ENCODE measurements at regions of chr20 and their contacts with region 1.

Region 1: GRCh38 chr20:41136680-41137613 is at the start of gene PLCG1:
- DNase-seq: peak; percentile 56 to 94
- H3K4me3 ChIP-seq: peak within 1 kb of the TSS; percentile 80 to 97 (median 90)
- H3K27ac ChIP-seq: peak within 1 kb of the TSS; percentile 93
- H3K4me1 ChIP-seq: peaks cover 25 to 40% (median 27%) of the 10 kb centered on the region in 4 experiments
- H3K27me3 ChIP-seq: peaks cover 0 to 9% (median 2%) of the 10 kb centered on the region in 4 experiments; a peak in 3 of 7 replicates
- CTCF ChIP-seq: no peak; a peak in 1 of 4 replicates
- EP300 ChIP-seq: no peak
- POLR2A ChIP-seq: peak; percentile 75 to 83
- RAD21 ChIP-seq: no peak
- total RNA-seq, gene PLCG1: 151 and 154 TPM in 2 replicates

Region 2: DNA sequence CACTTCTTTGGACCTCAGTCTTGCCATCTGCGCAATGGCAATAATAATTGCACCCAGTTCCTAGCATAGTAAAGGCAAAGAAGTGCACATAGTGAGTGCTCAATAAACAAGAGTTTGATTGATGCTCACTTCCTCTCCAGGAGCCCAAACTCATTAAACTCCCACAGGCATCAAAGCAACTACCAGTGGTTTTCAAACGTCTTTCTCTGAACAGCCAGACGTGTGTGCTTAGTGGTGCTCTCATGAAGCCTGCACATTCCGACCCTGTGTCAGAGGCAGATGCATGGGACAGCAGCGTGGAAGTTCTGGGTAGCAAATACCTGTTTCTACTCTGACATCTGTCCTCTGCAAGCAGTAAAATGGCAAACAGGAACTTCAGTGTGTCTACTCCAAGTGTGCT is 301.6 kb before region 1 on chr20:
- CTCF ChIA-PET with region 1: no interaction called
- POLR2A ChIA-PET with region 1: no interaction called
- DNase-seq: no peak
- H3K4me3 ChIP-seq: no peak overlapping the region
- H3K27ac ChIP-seq: no peak overlapping the region
- H3K4me1 ChIP-seq: no peaks in the 10 kb centered on the region
- H3K27me3 ChIP-seq: no peaks in the 10 kb centered on the region; a peak in 1 of 7 replicates
- CTCF ChIP-seq: no peak
- EP300 ChIP-seq: no peak
- POLR2A ChIP-seq: no peak
- RAD21 ChIP-seq: no peak

Region 3: DNA sequence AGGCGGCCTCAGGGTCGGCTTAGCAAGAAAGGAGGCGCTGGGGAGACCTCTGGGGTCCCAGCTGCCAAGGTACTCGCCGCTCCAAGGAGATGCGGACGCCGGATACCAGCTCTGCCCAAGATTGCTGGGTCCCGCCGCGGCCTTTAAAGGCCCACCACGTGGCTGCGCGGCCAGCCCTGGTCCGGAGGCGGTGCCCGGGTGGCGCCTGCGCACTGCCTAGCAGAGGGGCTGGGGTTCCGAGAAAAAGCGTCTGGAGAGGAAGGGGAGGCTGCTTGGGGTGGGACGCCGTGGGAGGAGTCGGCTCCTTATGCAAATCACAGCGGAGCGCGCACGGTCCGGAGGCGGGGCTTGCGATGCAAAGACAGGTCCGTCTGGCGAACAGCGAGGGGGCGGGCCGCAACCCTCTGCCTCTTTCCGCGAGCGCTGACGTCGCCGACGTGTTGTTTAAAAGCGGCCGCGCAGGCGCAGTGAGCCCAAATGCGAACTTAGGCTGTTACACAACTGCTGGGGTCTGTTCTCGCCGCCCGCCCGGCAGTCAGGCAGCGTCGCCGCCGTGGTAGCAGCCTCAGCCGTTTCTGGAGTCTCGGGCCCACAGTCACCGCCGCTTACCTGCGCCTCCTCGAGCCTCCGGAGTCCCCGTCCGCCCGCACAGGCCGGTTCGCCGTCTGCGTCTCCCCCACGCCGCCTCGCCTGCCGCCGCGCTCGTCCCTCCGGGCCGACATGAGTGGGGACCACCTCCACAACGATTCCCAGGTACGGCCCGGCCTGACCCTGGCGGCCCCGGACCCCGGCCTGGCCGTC is 108.4 kb before region 1 on chr20 and contains the start of gene TOP1:
- CTCF ChIA-PET with region 1: no interaction called
- POLR2A ChIA-PET with region 1: interaction called, 15 read pairs
- DNase-seq: peak; percentile 100
- H3K4me3 ChIP-seq: peak within 1 kb of the TSS; percentile 56 to 97 (median 67)
- H3K27ac ChIP-seq: peak within 1 kb of the TSS; percentile 93
- H3K4me1 ChIP-seq: peaks cover 3 to 9% (median 7%) of the 10 kb centered on the region in 4 experiments; a peak in 4 of 7 replicates
- H3K27me3 ChIP-seq: peaks cover 0 to 24% (median 10%) of the 10 kb centered on the region in 4 experiments; a peak in 3 of 7 replicates
- CTCF ChIP-seq: no peak; a peak in 1 of 4 replicates
- EP300 ChIP-seq: 0 out of 3 replicates have a peak, but pooled peaks of 1 of the 2 experiments have one; percentile 45
- POLR2A ChIP-seq: peak; percentile 90 to 97
- RAD21 ChIP-seq: no peak
- total RNA-seq, gene TOP1: 108 and 114 TPM in 2 replicates

Region 4: GRCh38 chr20:41125530-41126457 is 11.2 kb before region 1 on chr20:
- CTCF ChIA-PET with region 1: interaction called, 14 read pairs
- POLR2A ChIA-PET with region 1: interaction called, 6 read pairs
- DNase-seq: no peak
- H3K4me3 ChIP-seq: no peak overlapping the region
- H3K27ac ChIP-seq: no peak overlapping the region
- H3K4me1 ChIP-seq: no peaks in the 10 kb centered on the region
- H3K27me3 ChIP-seq: no peaks in the 10 kb centered on the region
- CTCF ChIP-seq: no peak
- EP300 ChIP-seq: no peak
- POLR2A ChIP-seq: peak in 1 of 2 experiments; percentile 62; a peak in 1 of 3 replicates
- RAD21 ChIP-seq: no peak

Region 5: DNA sequence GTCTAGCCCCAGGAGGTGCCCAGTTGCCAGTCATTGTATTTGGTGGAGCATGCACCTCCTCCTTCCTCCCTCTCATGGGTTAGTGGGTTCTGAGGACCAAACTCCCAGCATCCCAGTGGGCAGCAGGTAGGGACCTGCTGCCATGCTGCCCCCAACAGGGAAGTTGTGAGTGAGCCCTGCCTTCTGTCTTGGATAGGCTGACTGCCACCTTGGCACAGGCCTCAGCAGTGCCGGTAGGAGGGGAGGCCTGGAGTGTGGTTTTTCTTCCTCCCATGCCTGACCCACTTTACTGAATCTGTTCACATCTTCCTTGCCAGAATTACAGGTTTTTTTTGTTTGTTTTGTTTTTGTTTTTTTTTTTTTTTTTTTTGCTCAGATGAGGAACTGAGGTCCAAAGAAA is 24.9 kb after region 1 on chr20:
- CTCF ChIA-PET with region 1: interaction called, 31 read pairs
- POLR2A ChIA-PET with region 1: interaction called, 12 read pairs
- DNase-seq: no peak
- H3K4me3 ChIP-seq: no peak overlapping the region
- H3K27ac ChIP-seq: no peak overlapping the region
- H3K4me1 ChIP-seq: peaks cover 0 to 4% (median 1%) of the 10 kb centered on the region in 4 experiments; a peak in 3 of 7 replicates
- H3K27me3 ChIP-seq: no peaks in the 10 kb centered on the region
- CTCF ChIP-seq: no peak
- EP300 ChIP-seq: no peak
- POLR2A ChIP-seq: no peak
- RAD21 ChIP-seq: no peak

Region 6: DNA sequence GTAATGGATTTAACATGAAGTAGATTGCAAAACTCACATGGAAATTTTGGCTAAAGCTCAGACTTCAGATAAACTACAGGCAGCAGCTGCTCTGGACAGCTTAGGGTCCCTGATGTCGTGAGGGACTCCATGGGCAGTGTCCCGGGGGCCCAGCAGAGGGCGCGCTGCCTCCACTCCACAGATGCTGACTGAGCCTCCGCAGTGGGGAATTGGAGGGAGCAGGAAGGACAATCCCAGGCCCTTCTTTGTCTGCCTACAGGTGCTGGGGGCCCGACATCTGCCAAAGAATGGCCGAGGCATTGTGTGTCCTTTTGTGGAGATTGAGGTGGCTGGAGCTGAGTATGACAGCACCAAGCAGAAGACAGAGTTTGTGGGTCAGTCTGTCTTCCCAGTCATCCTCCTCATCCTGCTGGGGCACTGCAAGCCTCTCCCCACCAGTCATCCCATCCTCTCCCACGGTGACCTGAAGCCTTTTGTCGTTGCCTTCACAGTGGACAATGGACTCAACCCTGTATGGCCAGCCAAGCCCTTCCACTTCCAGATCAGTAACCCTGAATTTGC is 36.3 kb after region 1 on chr20:
- CTCF ChIA-PET with region 1: interaction called, 17 read pairs
- POLR2A ChIA-PET with region 1: interaction called, 3 read pairs
- DNase-seq: peak; percentile 38 to 93
- H3K4me3 ChIP-seq: no peak overlapping the region
- H3K27ac ChIP-seq: no peak overlapping the region
- H3K4me1 ChIP-seq: no peaks in the 10 kb centered on the region
- H3K27me3 ChIP-seq: no peaks in the 10 kb centered on the region
- CTCF ChIP-seq: peak; percentile 95 to 98 (median 97)
- EP300 ChIP-seq: no peak
- POLR2A ChIP-seq: 0 out of 3 replicates have a peak, but pooled peaks of 1 of the 2 experiments have one; percentile 29
- RAD21 ChIP-seq: peak; percentile 94 to 98

Measured in H1 (cell line).